T-cell (primary cell): ENCODE measurements at regions of chr2 and their contacts with region 1.

Region 1: DNA sequence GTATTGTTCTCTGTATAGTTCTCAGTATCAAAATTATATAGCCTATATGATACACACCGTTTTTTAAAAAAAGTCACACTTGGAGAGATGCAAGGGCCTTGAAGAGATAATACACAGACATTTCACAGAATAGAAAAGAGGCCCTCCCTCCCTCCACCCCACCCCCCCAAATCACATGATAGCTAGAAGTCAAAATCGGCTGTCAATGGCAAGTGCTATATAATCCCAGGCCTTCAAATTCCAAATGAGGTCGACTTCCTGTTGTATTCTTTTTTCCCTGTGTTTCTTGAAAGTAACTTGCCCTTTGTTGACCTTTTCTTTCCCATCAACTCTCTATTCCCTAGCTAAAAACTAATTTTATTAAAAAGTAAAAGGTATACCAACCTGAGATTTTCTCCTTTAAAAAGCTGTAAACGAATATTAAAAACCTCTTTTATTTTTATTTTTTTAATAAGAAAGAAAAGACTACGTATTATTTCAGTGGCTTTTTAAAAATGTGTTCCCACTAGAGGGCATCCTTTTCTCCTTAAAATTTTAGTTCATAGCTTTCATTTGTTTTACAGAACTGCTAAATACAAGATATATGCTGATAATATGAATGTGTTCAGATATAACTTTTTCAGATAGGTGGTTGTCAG is 46.6 kb downstream of the KCMF1 start:
- DNase-seq: peak in 1 of 35 experiments; percentile 38
- ATAC-seq: no peak
- H3K4me3 ChIP-seq: no peak overlapping the region
- H3K4me3 Mint-ChIP-seq: no peak overlapping the region
- H3K27ac ChIP-seq: no peak overlapping the region
- H3K27ac Mint-ChIP-seq: peak overlapping the region in 1 of 2 donors; percentile 27
- H3K4me1 ChIP-seq: peaks cover 6 to 14% of the 10 kb centered on the region in 2 experiments
- H3K4me1 Mint-ChIP-seq: peaks cover 69 to 79% (median 71%) of the 10 kb centered on the region in 3 donors
- H3K27me3 ChIP-seq: no peaks in the 10 kb centered on the region
- H3K27me3 Mint-ChIP-seq: no peaks in the 10 kb centered on the region

Region 2: GRCh38 chr2:84716564-84716963 is 301.0 kb before region 1 on chr2:
- CTCF ChIA-PET with region 1: interaction called in 1 of 2 experiments, 17 read pairs
- POLR2A ChIA-PET with region 1: no interaction called
- DNase-seq: no peak
- ATAC-seq: no peak
- H3K4me3 ChIP-seq: peak overlapping the region in 1 of 2 donors; percentile 23
- H3K4me3 Mint-ChIP-seq: peak overlapping the region in 1 of 3 donors; percentile 61
- H3K27ac ChIP-seq: no peak overlapping the region
- H3K27ac Mint-ChIP-seq: peak overlapping the region; percentile 75 to 92
- H3K4me1 ChIP-seq: peaks cover 8 to 20% of the 10 kb centered on the region in 2 experiments
- H3K4me1 Mint-ChIP-seq: peaks cover 29 to 39% (median 38%) of the 10 kb centered on the region in 3 donors
- H3K27me3 ChIP-seq: no peaks in the 10 kb centered on the region
- H3K27me3 Mint-ChIP-seq: no peaks in the 10 kb centered on the region

Region 3: GRCh38 chr2:84991404-84992151 is 26.0 kb before region 1 on chr2:
- CTCF ChIA-PET with region 1: interaction called in 1 of 2 experiments, 10 read pairs
- POLR2A ChIA-PET with region 1: no interaction called
- DNase-seq: no peak
- ATAC-seq: no peak
- H3K4me3 ChIP-seq: no peak overlapping the region
- H3K4me3 Mint-ChIP-seq: no peak overlapping the region
- H3K27ac ChIP-seq: no peak overlapping the region
- H3K27ac Mint-ChIP-seq: peak overlapping the region in 1 of 2 donors; percentile 57
- H3K4me1 ChIP-seq: peaks cover 21 to 28% of the 10 kb centered on the region in 2 experiments
- H3K4me1 Mint-ChIP-seq: peaks cover 14 to 41% (median 41%) of the 10 kb centered on the region in 3 donors
- H3K27me3 ChIP-seq: no peaks in the 10 kb centered on the region
- H3K27me3 Mint-ChIP-seq: no peaks in the 10 kb centered on the region

Region 4: GRCh38 chr2:85130407-85130806 is 112.9 kb after region 1 on chr2:
- CTCF ChIA-PET with region 1: interaction called in 1 of 2 experiments, 11 read pairs
- POLR2A ChIA-PET with region 1: no interaction called
- DNase-seq: no peak
- ATAC-seq: no peak
- H3K4me3 ChIP-seq: no peak overlapping the region
- H3K4me3 Mint-ChIP-seq: no peak overlapping the region
- H3K27ac ChIP-seq: no peak overlapping the region
- H3K27ac Mint-ChIP-seq: no peak overlapping the region
- H3K4me1 ChIP-seq: peaks cover 3 to 24% of the 10 kb centered on the region in 2 experiments
- H3K4me1 Mint-ChIP-seq: peaks cover 0 to 13% (median 11%) of the 10 kb centered on the region in 3 donors
- H3K27me3 ChIP-seq: peaks cover 10 to 44% of the 10 kb centered on the region in 2 experiments
- H3K27me3 Mint-ChIP-seq: peaks cover 35% of the 10 kb centered on the region in 2 donors

Region 5: GRCh38 chr2:85545780-85546240 is 528.3 kb after region 1 on chr2:
- CTCF ChIA-PET with region 1: no interaction called
- POLR2A ChIA-PET with region 1: no interaction called
- DNase-seq: no peak
- ATAC-seq: no peak
- H3K4me3 ChIP-seq: no peak overlapping the region
- H3K4me3 Mint-ChIP-seq: no peak overlapping the region
- H3K27ac ChIP-seq: no peak overlapping the region
- H3K27ac Mint-ChIP-seq: no peak overlapping the region
- H3K4me1 ChIP-seq: peaks cover 5 to 6% of the 10 kb centered on the region in 2 experiments
- H3K4me1 Mint-ChIP-seq: peaks cover 20 to 22% (median 21%) of the 10 kb centered on the region in 3 donors
- H3K27me3 ChIP-seq: no peaks in the 10 kb centered on the region
- H3K27me3 Mint-ChIP-seq: no peaks in the 10 kb centered on the region